Activated naive CD4-positive, alpha-beta T cell treated with anti-CD3 and anti-CD28 coated beads for 36 hours (primary cell): ENCODE measurements at regions of chr11 and their contacts with region 1.

Region 1: GRCh38 chr11:61747192-61747966 is 5.1 kb upstream of the MYRF start:
- DNase-seq: peak; percentile 57
- H3K4me3 Mint-ChIP-seq: no peak overlapping the region
- H3K27ac Mint-ChIP-seq: no peak overlapping the region
- H3K4me1 Mint-ChIP-seq: peaks cover 4% of the 10 kb centered on the region
- H3K27me3 Mint-ChIP-seq: peaks cover 21% of the 10 kb centered on the region

Region 2: GRCh38 chr11:61495801-61496597 is 251.4 kb before region 1 on chr11:
- CTCF ChIA-PET with region 1: no interaction called
- intact Hi-C with region 1: no loop called
- DNase-seq: no peak
- H3K4me3 Mint-ChIP-seq: no peak overlapping the region
- H3K27ac Mint-ChIP-seq: no peak overlapping the region
- H3K4me1 Mint-ChIP-seq: no peaks in the 10 kb centered on the region
- H3K27me3 Mint-ChIP-seq: no peaks in the 10 kb centered on the region

Region 3: GRCh38 chr11:61632096-61632495 is 115.3 kb before region 1 on chr11:
- CTCF ChIA-PET with region 1: no interaction called
- intact Hi-C with region 1: no loop called
- DNase-seq: no peak
- H3K4me3 Mint-ChIP-seq: no peak overlapping the region
- H3K27ac Mint-ChIP-seq: no peak overlapping the region
- H3K4me1 Mint-ChIP-seq: no peaks in the 10 kb centered on the region
- H3K27me3 Mint-ChIP-seq: no peaks in the 10 kb centered on the region

Region 4: GRCh38 chr11:61776551-61777075 is 29.2 kb after region 1 on chr11:
- CTCF ChIA-PET with region 1: interaction called, 7 read pairs
- intact Hi-C with region 1: loop called (anchors 1 kb)
- DNase-seq: peak; percentile 78
- H3K4me3 Mint-ChIP-seq: no peak overlapping the region
- H3K27ac Mint-ChIP-seq: no peak overlapping the region
- H3K4me1 Mint-ChIP-seq: peaks cover 14% of the 10 kb centered on the region
- H3K27me3 Mint-ChIP-seq: peaks cover 3% of the 10 kb centered on the region